Activated CD4-positive, alpha-beta T cell treated with anti-CD3 and anti-CD28 coated beads, Interleukin-2, amount 10 ng/mL, durations not matched to agents 7 days and 5 days (primary cell): ENCODE measurements at regions of chr22 and their contacts with region 1.

Region 1: GRCh38 chr22:25747245-25747944 is 5.4 kb downstream of the MYO18B start:
- DNase-seq: no peak
- H3K4me3 Mint-ChIP-seq: no peak overlapping the region
- H3K27ac Mint-ChIP-seq: no peak overlapping the region
- H3K4me1 Mint-ChIP-seq: peaks cover 78% of the 10 kb centered on the region
- H3K27me3 Mint-ChIP-seq: no peaks in the 10 kb centered on the region

Region 2: GRCh38 chr22:25736378-25737011 is 10.9 kb before region 1 on chr22:
- CTCF ChIA-PET with region 1: interaction called, 20 read pairs
- POLR2A ChIA-PET with region 1: interaction called, 7 read pairs
- DNase-seq: peak; percentile 86
- H3K4me3 Mint-ChIP-seq: peak overlapping the region; percentile 44
- H3K27ac Mint-ChIP-seq: peak overlapping the region; percentile 99
- H3K4me1 Mint-ChIP-seq: peaks cover 73% of the 10 kb centered on the region
- H3K27me3 Mint-ChIP-seq: no peaks in the 10 kb centered on the region

Region 3: DNA sequence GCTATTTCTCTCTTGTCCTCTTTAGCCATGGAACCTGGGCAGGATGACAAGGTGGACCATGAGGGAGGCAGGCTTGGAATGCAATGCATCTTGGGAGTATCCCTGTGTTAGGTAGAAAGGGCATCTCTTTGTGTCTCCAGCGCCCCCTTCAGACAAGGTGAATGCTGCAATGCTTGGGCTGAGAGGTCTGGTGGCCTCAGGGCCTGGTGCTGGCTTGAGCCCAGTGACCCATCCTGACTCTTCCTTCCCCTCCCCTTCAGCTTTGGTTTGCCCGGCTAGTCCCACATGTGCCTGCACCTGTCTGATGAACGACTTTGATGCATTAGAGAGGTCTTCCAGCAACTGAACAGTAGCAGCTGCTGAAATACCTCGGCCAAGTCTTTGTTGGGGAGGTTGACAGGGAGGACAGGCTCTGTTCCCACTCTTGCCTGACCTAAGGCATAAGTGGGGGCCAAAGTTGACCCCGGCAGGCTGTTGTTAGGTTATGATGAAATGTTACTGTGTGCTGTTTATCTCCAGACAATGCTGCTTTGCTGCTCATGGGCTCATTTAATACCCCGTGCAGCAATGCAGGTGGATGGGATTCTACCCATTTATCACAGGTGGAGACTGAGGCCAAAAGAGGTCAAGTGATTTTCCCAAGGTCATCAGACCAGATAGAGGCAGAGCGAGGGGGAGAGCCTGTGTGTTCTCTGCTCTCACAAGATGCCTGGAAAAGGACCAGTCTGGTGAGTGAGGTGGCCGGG is 17.0 kb after region 1 on chr22:
- CTCF ChIA-PET with region 1: interaction called, 12 read pairs
- POLR2A ChIA-PET with region 1: no interaction called
- DNase-seq: no peak
- H3K4me3 Mint-ChIP-seq: no peak overlapping the region
- H3K27ac Mint-ChIP-seq: no peak overlapping the region
- H3K4me1 Mint-ChIP-seq: peaks cover 40% of the 10 kb centered on the region
- H3K27me3 Mint-ChIP-seq: no peaks in the 10 kb centered on the region